SK-N-SH (cell line): ENCODE measurements at regions of chr18 and their contacts with region 1.

Region 1: DNA sequence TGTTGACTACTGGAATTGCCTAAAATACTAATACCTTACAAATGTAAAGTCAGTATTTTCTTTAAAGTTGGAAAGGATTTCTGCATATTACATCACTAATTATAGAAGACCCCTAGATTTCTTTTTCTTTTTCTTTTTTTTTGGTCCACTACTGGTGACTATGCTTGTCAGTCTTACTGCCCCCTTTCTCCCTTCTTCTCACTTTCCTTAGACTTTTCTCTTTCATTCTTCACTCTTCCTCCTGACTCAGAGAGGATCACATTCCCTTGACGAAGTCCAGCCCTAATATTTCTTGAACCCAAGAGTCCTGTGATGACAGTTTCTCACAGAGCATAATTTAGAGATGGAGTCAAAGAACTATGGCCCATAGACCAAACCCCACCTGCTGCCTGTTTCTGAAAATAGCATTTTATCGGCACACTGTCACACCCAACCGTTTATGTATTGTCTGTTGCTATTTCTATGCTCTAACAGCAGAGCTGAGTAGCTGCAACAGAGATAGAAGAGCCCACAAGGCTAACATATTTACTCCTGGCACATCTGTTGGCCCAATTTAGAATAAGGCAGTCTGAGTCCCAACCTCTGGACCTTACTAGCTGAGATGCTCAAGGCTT is 40.6 kb upstream of the RIOK3 start:
- DNase-seq: no peak
- H3K4me3 ChIP-seq: no peak overlapping the region
- H3K27ac ChIP-seq: no peak overlapping the region
- H3K4me1 ChIP-seq: no peaks in the 10 kb centered on the region
- H3K27me3 ChIP-seq: no peaks in the 10 kb centered on the region
- CTCF ChIP-seq: no peak
- EP300 ChIP-seq: no peak
- RAD21 ChIP-seq: no peak

Region 2: GRCh38 chr18:23032030-23032582 is 380.4 kb before region 1 on chr18:
- CTCF ChIA-PET with region 1: interaction called, 21 read pairs
- POLR2A ChIA-PET with region 1: no interaction called
- DNase-seq: no peak
- H3K4me3 ChIP-seq: no peak overlapping the region
- H3K27ac ChIP-seq: peak overlapping the region in 1 of 2 experiments; percentile 44; a peak in 2 of 4 replicates
- H3K4me1 ChIP-seq: peaks cover 0 to 17% of the 10 kb centered on the region in 2 experiments; a peak in 2 of 4 replicates
- H3K27me3 ChIP-seq: no peaks in the 10 kb centered on the region
- CTCF ChIP-seq: no peak
- EP300 ChIP-seq: no peak
- RAD21 ChIP-seq: no peak

Region 3: DNA sequence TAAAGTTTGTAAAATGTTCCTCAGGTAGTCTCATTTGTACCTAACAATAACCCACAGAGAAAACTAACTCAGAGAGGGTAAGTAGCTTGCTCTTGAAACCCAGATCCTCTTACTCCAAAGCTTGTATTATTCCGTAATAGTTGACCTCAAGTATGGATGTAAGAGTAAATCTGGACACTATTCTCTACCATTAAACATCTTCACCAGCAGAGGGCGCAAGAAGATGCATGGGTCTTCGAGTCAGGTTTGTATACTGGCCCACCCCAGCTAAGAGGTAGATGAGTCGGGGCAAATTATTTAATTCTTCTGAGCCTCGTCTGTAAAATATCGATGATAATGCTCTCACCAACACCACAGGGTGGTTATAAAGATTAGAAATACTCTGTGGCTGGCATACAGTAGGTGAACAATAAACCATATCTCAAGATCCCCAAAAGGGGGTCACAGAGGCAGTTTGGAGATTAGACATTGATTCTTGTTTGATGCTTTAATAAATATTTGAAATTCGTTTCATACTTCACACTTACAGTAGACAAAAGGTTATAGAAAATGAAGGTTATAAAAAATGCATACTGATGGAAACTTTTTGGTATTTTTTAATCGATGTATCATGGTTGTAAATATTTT is 280.7 kb before region 1 on chr18:
- CTCF ChIA-PET with region 1: interaction called, 43 read pairs
- POLR2A ChIA-PET with region 1: no interaction called
- DNase-seq: peak; percentile 78
- H3K4me3 ChIP-seq: no peak overlapping the region; a peak in 1 of 4 replicates
- H3K27ac ChIP-seq: no peak overlapping the region
- H3K4me1 ChIP-seq: peaks cover 5 to 20% of the 10 kb centered on the region in 2 experiments; a peak in 2 of 4 replicates
- H3K27me3 ChIP-seq: no peaks in the 10 kb centered on the region
- CTCF ChIP-seq: peak; percentile 86
- EP300 ChIP-seq: no peak
- RAD21 ChIP-seq: peak; percentile 92

Region 4: DNA sequence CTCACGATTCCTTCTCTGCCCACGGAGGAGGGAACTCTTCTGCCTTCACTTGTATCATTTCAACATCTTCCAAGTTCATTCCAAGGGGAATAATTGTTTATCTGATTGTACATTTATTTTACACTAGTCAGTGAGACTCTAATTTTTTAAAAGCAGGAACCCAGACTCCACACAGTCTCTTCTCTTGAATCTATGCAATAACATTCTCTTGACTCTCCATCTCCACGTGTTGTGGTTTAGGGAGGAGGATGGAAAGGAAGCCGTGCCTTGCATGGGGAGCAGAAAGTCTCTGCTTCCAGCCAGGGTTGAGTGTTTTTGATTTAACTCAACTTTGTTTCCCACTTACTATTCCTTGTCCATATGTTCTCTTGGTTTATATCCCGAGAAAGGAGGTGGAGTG is 90.5 kb before region 1 on chr18:
- CTCF ChIA-PET with region 1: no interaction called
- POLR2A ChIA-PET with region 1: no interaction called
- DNase-seq: no peak
- H3K4me3 ChIP-seq: no peak overlapping the region
- H3K27ac ChIP-seq: peak overlapping the region in 1 of 2 experiments; percentile 43; a peak in 1 of 4 replicates
- H3K4me1 ChIP-seq: no peaks in the 10 kb centered on the region
- H3K27me3 ChIP-seq: no peaks in the 10 kb centered on the region
- CTCF ChIP-seq: no peak
- EP300 ChIP-seq: no peak
- RAD21 ChIP-seq: no peak

Region 5: GRCh38 chr18:23398401-23398800 is 14.1 kb before region 1 on chr18:
- CTCF ChIA-PET with region 1: interaction called, 13 read pairs
- POLR2A ChIA-PET with region 1: no interaction called
- DNase-seq: no peak
- H3K4me3 ChIP-seq: no peak overlapping the region
- H3K27ac ChIP-seq: no peak overlapping the region
- H3K4me1 ChIP-seq: peaks cover 5 to 18% of the 10 kb centered on the region in 2 experiments; a peak in 3 of 4 replicates
- H3K27me3 ChIP-seq: no peaks in the 10 kb centered on the region
- CTCF ChIP-seq: no peak
- EP300 ChIP-seq: no peak
- RAD21 ChIP-seq: no peak

Region 6: DNA sequence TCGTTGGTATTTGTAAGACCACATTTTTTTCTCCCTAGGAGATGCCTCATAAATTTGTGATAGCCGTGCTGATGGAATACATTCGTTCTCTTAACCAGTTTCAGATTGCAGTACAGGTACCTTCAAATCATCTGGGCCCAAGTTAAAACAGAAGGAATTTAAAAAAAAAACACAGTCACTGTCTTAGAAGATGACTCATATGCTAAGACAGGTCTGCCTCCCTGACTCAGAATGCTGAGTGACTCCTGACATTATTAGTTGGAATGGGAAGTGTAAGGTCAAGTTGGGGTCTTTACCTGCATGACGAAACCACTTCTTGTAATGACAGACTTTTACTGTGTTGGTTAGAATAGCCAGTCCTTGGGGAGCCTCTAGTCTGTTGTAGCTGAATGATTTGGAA is 117.1 kb after region 1 on chr18:
- CTCF ChIA-PET with region 1: no interaction called
- POLR2A ChIA-PET with region 1: no interaction called
- DNase-seq: no peak
- H3K4me3 ChIP-seq: no peak overlapping the region
- H3K27ac ChIP-seq: peak overlapping the region; percentile 48 to 58; a peak in 3 of 4 replicates
- H3K4me1 ChIP-seq: peaks cover 0 to 18% of the 10 kb centered on the region in 2 experiments; a peak in 2 of 4 replicates
- H3K27me3 ChIP-seq: no peaks in the 10 kb centered on the region
- CTCF ChIP-seq: no peak
- EP300 ChIP-seq: peak in 1 of 2 experiments; percentile 53; a peak in 1 of 4 replicates
- RAD21 ChIP-seq: no peak